Activated T-helper 2 cell treated with anti-CD3 and anti-CD28 coated beads, Interferon-gamma antibody, Interleukin-2, Interleukin-4, amounts not matched to agents 10 μg/mL and 5 μg/mL and 100 μg/mL, durations not matched to agents 14 hours and 24 hours and 36 hours (primary cell): ENCODE measurements at regions of chr6 and their contacts with region 1.

Region 1: GRCh38 chr6:125314019-125314581 is 12.3 kb upstream of the HDDC2 start:
- DNase-seq: no peak
- H3K4me3 Mint-ChIP-seq: no peak overlapping the region
- H3K27ac Mint-ChIP-seq: no peak overlapping the region
- H3K4me1 Mint-ChIP-seq: no peaks in the 10 kb centered on the region
- H3K27me3 Mint-ChIP-seq: peaks cover 21% of the 10 kb centered on the region

Region 2: DNA sequence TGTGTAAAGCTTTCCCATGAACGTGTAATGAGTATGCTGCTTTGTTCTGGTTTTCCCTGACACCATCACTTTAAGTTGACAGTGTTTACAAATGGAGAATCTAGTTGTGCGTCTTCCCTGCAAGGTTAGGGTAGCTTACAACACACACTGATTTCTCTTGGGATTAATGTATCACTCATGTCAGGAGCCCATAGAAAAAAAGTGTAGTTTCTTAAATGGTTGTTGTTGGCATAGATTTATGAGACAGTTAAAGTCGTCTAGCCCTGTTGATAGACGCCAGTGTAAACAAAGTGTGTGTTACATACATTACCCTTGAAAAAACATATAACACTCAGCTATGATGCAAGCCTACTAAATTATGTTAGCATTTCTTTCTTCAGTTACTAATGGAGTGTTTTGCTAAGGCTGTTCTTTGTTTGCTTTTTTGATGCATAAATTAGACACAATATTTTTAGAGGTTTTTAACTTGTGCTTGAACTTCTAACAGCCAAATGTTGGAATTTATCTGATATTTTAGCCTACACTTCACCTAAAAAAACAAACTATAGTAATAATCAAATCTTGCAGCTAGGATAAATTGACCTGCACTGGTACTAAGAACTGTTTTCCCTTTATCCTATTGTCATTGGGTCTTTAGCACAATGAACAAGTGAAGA is 263.3 kb before region 1 on chr6:
- intact Hi-C with region 1: no loop called
- DNase-seq: no peak
- H3K4me3 Mint-ChIP-seq: no peak overlapping the region
- H3K27ac Mint-ChIP-seq: no peak overlapping the region
- H3K4me1 Mint-ChIP-seq: no peaks in the 10 kb centered on the region
- H3K27me3 Mint-ChIP-seq: peaks cover 3% of the 10 kb centered on the region

Region 3: DNA sequence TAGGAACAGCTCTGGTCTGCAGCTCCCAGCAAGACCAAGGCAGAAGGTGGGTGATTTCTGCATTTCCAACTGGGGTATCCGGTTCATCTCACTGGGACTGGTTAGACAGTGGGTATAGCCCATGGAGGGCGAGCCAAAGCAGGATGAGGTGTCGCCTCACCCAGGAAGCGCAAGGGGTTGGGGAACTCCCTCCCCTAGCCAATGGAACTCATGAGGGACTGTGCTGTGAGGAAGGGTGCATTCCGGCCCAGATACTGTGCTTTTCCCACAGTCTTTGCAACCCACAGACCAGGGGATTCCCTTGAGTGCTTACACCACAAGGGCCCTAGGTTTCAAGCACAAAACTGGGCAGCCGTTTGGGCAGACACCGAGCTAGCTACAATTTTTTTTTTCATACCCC is 34.1 kb before region 1 on chr6:
- intact Hi-C with region 1: no loop called
- DNase-seq: no peak
- H3K4me3 Mint-ChIP-seq: no peak overlapping the region
- H3K27ac Mint-ChIP-seq: no peak overlapping the region
- H3K4me1 Mint-ChIP-seq: peaks cover 35% of the 10 kb centered on the region
- H3K27me3 Mint-ChIP-seq: no peaks in the 10 kb centered on the region

Region 4: GRCh38 chr6:125765944-125766343 is 451.8 kb after region 1 on chr6:
- intact Hi-C with region 1: loop called (anchors 1 kb)
- DNase-seq: no peak
- H3K4me3 Mint-ChIP-seq: no peak overlapping the region
- H3K27ac Mint-ChIP-seq: no peak overlapping the region
- H3K4me1 Mint-ChIP-seq: peaks cover 4% of the 10 kb centered on the region
- H3K27me3 Mint-ChIP-seq: peaks cover 50% of the 10 kb centered on the region

Region 5: DNA sequence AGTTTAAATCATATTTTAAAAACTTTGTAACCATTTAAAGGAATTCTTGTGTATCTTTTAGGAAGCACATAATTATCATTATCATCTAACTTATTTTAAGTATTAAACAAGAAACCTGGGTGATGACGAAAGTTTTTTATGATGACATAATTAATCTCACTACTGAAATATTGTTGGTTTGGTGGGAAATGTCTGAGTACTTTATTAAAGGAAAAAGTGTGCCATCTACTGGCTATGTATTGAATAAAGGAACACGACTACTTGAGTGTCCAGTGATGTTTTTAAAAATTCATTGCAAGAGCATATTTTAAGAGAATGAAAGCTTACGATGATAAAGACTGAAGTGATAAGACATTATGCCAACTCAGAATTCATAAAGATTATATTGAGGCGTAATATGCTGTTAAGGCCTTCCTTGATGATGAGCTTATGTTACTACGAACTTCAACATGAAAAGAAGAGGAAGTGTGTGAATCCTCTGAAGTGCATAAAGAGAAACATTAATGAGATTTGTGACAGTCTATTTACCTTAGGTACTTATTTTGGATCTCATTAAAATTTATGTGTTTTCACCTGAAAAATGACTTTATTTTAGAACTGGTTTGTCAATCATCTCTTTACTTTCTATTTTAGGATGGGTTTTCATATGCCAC is 660.2 kb after region 1 on chr6:
- intact Hi-C with region 1: loop called (anchors 2 kb)
- DNase-seq: no peak
- H3K4me3 Mint-ChIP-seq: no peak overlapping the region
- H3K27ac Mint-ChIP-seq: no peak overlapping the region
- H3K4me1 Mint-ChIP-seq: peaks cover 6% of the 10 kb centered on the region
- H3K27me3 Mint-ChIP-seq: no peaks in the 10 kb centered on the region